Activated CD8-positive, alpha-beta T cell treated with anti-CD3 and anti-CD28 coated beads for 36 hours (primary cell): ENCODE measurements at regions of chr16 and their contacts with region 1.

Region 1: GRCh38 chr16:55465077-55465896 is 13.7 kb upstream of the MMP2 start:
- DNase-seq: peak; percentile 91
- ATAC-seq: peak; percentile 99
- H3K4me3 Mint-ChIP-seq: no peak overlapping the region
- H3K27ac Mint-ChIP-seq: no peak overlapping the region
- H3K4me1 Mint-ChIP-seq: no peaks in the 10 kb centered on the region
- H3K27me3 Mint-ChIP-seq: peaks cover 2% of the 10 kb centered on the region
- CTCF ChIP-seq: peak; percentile 99

Region 2: DNA sequence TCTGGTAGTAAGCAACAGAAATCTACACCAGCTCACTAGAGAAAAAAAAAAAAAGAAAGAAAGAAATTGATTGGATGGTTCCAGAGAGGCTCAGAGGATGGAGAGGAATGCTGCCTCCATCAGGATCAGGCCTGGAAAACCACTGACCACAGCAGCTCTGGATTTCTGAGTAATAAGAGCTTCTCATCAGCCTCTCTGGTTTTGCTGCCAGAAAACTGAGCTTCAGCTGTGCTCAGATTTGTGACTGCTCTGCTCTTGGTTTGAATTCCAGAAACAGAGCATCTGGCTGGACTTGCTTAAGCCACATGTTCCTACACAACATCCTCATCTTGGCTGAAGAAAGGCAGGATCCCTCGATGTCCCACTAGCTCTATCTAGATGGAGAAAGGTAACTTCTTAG is 115.4 kb before region 1 on chr16:
- CTCF ChIA-PET with region 1: no interaction called
- POLR2A ChIA-PET with region 1: no interaction called
- intact Hi-C with region 1: no loop called
- DNase-seq: no peak
- ATAC-seq: no peak
- H3K4me3 Mint-ChIP-seq: no peak overlapping the region
- H3K27ac Mint-ChIP-seq: no peak overlapping the region
- H3K4me1 Mint-ChIP-seq: no peaks in the 10 kb centered on the region
- H3K27me3 Mint-ChIP-seq: peaks cover 14% of the 10 kb centered on the region
- CTCF ChIP-seq: no peak

Region 3: DNA sequence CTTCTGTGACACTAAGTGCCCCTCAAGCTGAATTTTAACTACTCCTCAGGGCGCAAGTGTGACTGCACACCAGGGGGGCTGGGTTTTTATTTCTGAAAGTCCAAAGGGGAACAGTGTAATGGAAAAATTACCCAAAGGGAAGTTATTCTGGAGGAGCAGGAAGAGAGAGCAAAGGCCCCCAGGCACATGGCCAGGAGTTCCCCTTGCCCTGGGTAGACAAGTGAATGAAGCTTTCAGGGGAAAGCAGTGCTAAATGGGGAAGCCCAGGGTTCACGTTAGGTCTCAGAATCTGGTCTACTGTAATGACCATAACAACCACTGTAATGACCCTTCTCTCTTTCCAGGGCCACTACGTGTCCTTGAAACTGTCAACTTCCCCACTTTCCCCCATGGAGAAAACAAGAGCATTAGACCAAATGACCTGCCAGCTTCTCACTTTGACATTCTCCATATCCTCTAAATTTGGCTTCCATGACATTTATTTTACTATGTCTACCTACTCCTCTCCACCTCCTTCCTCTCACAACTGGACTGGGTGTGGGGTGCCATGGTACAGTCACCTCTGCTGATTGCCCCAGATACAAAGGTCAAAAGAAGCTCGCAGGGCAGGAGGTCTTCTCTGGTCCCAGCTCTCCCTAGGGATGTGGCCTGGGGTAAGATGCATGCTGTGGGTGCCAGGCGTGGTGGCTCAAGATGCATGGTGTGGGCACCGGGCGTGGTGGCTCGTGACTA is 20.4 kb before region 1 on chr16:
- CTCF ChIA-PET with region 1: interaction called, 18 read pairs
- POLR2A ChIA-PET with region 1: no interaction called
- intact Hi-C with region 1: no loop called
- DNase-seq: no peak
- ATAC-seq: no peak
- H3K4me3 Mint-ChIP-seq: no peak overlapping the region
- H3K27ac Mint-ChIP-seq: no peak overlapping the region
- H3K4me1 Mint-ChIP-seq: no peaks in the 10 kb centered on the region
- H3K27me3 Mint-ChIP-seq: peaks cover 8% of the 10 kb centered on the region
- CTCF ChIP-seq: no peak

Region 4: DNA sequence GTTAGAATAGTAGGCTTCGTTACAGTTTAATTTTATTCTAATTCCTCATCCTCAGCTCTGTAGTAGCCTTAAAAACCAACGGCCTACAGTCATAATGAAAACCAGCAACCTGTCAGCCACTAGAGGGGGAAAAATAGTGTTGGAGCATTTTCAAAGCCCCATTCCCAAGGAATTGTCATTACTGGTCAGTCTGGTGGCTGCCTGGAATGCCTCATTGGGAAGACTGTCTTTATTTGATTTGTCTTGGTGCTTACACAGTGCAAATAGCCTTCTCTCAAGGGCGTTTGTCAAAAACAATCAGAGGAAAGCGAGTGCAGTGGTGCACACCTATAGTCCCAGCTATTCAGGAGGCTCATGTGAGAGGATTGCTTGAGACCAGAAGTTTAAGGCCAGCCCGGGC is 48.3 kb after region 1 on chr16:
- CTCF ChIA-PET with region 1: interaction called, 12 read pairs
- POLR2A ChIA-PET with region 1: no interaction called
- intact Hi-C with region 1: no loop called
- DNase-seq: no peak
- ATAC-seq: no peak
- H3K4me3 Mint-ChIP-seq: no peak overlapping the region
- H3K27ac Mint-ChIP-seq: no peak overlapping the region
- H3K4me1 Mint-ChIP-seq: peaks cover 5% of the 10 kb centered on the region
- H3K27me3 Mint-ChIP-seq: peaks cover 33% of the 10 kb centered on the region
- CTCF ChIP-seq: no peak

Region 5: DNA sequence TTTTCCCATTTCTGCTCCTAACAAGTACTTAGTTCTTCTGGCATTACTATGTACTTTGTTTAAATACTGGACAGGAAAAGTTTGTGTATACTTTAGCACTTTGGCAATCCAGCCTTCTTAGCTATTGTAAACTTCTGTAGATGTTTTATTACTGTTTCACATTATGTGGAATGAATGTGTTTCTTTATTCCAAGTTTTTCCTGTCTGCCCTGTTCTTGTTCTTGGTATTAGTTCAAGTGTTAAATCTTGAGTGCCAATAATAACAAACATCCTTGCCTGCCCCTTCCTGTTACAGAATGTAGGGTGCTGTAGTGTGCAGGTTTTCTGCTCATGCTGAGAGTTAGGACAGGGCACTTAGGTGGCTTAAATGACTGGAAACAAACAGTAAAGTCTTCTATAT is 93.9 kb after region 1 on chr16:
- CTCF ChIA-PET with region 1: interaction called, 10 read pairs
- POLR2A ChIA-PET with region 1: interaction called, 4 read pairs
- intact Hi-C with region 1: no loop called
- DNase-seq: no peak
- ATAC-seq: no peak
- H3K4me3 Mint-ChIP-seq: no peak overlapping the region
- H3K27ac Mint-ChIP-seq: no peak overlapping the region
- H3K4me1 Mint-ChIP-seq: no peaks in the 10 kb centered on the region
- H3K27me3 Mint-ChIP-seq: peaks cover 12% of the 10 kb centered on the region
- CTCF ChIP-seq: no peak

Region 6: GRCh38 chr16:55711959-55712876 is 246.9 kb after region 1 on chr16:
- CTCF ChIA-PET with region 1: interaction called, 121 read pairs
- POLR2A ChIA-PET with region 1: no interaction called
- intact Hi-C with region 1: no loop called
- DNase-seq: peak; percentile 83
- ATAC-seq: peak; percentile 58
- H3K4me3 Mint-ChIP-seq: no peak overlapping the region
- H3K27ac Mint-ChIP-seq: no peak overlapping the region
- H3K4me1 Mint-ChIP-seq: no peaks in the 10 kb centered on the region
- H3K27me3 Mint-ChIP-seq: peaks cover 18% of the 10 kb centered on the region
- CTCF ChIP-seq: peak; percentile 83